ENCODE measurements at regions of chr22 and their contacts with region 1.

Region 1: DNA sequence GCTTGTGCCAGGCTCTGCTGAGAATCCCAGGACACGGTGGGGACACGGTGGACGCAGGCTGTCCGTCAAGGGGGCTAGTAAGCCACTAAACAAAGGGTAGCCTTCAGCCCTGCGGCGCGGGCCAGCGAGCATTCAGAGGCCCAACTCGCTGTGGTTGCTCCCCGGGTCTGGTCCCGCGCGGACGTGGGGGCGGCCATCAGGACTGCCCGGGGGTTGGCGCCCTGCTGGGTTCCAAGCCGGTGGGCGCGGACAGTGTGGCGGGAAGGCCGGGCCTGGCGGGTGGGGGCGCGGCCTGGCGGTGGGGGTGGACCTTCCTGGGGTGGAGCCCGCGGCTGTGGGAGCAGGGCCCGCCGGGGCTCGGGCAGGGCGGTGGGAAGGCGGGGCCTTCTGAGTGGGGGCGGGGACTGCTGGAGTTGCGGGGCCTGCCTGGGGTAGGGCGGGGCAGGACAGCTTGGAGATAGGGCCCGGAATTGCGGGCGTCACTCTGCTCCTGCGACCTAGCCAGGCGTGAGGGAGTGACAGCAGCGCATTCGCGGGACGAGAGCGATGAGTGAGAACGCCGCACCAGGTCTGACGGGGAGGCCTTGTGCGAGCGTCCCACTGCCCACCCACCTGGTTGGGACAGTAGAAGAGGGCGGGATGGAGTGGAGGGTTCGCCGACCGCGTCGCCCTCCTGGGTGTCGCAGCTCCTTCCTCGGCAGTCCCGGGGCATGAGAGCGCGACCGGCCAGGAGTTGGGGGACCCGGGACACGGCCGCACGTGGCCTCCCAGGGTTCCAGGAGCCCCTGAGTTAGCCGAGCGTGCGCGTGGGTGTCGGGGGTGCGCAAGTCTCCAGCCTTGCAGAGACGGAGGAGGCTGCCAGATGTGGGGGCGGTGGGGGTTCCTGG is at the start of gene SERHL2:
- DNase-seq: peak; percentile 86
- H3K4me3 Mint-ChIP-seq: peak within 1 kb of the TSS; percentile 81
- H3K27ac Mint-ChIP-seq: peak within 1 kb of the TSS; percentile 55
- H3K4me1 Mint-ChIP-seq: peaks cover 12% of the 10 kb centered on the region
- H3K27me3 Mint-ChIP-seq: no peaks in the 10 kb centered on the region
- total RNA-seq, gene SERHL2: 1.8 and 2.2 TPM in 2 replicates

Region 2: GRCh38 chr22:42419243-42419881 is 134.4 kb before region 1 on chr22:
- intact Hi-C with region 1: no loop called
- DNase-seq: no peak
- H3K4me3 Mint-ChIP-seq: no peak overlapping the region
- H3K27ac Mint-ChIP-seq: no peak overlapping the region
- H3K4me1 Mint-ChIP-seq: no peaks in the 10 kb centered on the region
- H3K27me3 Mint-ChIP-seq: peaks cover 1% of the 10 kb centered on the region

Region 3: DNA sequence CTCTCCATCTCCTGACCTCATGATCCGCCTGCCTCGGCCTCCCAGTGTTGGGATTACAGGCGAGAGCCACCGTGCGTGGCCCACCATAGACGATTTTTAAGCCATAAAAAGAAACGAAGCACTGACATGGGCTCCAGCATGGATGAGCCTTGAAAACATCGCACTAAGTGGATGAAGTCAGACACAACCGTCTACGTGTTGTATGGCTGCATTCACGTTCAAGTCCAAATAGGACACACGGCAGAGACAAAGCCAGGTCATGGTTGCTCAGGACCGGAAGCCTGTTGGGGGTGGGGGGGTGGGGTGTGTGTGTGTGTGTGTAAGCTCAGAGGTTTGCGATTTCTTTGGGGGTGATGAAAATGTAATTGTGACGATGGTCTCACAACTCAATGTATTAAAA is 44.2 kb before region 1 on chr22:
- intact Hi-C with region 1: loop called (anchors 2 kb)
- DNase-seq: no peak
- H3K4me3 Mint-ChIP-seq: no peak overlapping the region
- H3K27ac Mint-ChIP-seq: no peak overlapping the region
- H3K4me1 Mint-ChIP-seq: no peaks in the 10 kb centered on the region
- H3K27me3 Mint-ChIP-seq: no peaks in the 10 kb centered on the region

Region 4: GRCh38 chr22:42621505-42622002 is 67.8 kb after region 1 on chr22:
- intact Hi-C with region 1: no loop called
- DNase-seq: peak; percentile 43
- H3K4me3 Mint-ChIP-seq: no peak overlapping the region
- H3K27ac Mint-ChIP-seq: no peak overlapping the region
- H3K4me1 Mint-ChIP-seq: no peaks in the 10 kb centered on the region
- H3K27me3 Mint-ChIP-seq: no peaks in the 10 kb centered on the region